Right cardiac atrium (tissue), 5 donors: ENCODE measurements at regions of chr17 and their contacts with region 1.

Region 1: DNA sequence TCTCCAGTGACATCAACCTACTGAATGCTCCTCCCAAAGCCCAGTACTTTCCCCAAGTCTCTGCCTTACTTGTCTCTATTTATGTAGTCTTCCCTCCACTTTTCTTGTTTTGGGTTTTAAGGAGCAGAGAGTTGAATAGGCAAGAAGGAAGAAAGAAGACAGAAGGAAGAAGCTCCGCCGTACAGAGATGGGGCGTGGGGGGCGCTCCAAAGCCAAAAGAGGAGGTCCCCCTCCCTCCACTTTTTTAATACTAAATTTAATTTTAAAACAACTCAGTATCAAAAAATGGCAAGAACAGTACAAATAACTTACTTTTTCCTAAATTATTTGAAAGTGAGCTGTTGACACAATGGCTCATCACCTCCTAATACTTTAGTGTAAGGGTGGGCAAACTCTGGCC is 4.6 kb downstream of the EFTUD2 start:
- DNase-seq: no peak
- ATAC-seq: no peak
- H3K4me3 ChIP-seq: no peak overlapping the region
- H3K27ac ChIP-seq: no peak overlapping the region
- H3K4me1 ChIP-seq: no peaks in the 10 kb centered on the region
- H3K27me3 ChIP-seq: no peaks in the 10 kb centered on the region

Region 2: DNA sequence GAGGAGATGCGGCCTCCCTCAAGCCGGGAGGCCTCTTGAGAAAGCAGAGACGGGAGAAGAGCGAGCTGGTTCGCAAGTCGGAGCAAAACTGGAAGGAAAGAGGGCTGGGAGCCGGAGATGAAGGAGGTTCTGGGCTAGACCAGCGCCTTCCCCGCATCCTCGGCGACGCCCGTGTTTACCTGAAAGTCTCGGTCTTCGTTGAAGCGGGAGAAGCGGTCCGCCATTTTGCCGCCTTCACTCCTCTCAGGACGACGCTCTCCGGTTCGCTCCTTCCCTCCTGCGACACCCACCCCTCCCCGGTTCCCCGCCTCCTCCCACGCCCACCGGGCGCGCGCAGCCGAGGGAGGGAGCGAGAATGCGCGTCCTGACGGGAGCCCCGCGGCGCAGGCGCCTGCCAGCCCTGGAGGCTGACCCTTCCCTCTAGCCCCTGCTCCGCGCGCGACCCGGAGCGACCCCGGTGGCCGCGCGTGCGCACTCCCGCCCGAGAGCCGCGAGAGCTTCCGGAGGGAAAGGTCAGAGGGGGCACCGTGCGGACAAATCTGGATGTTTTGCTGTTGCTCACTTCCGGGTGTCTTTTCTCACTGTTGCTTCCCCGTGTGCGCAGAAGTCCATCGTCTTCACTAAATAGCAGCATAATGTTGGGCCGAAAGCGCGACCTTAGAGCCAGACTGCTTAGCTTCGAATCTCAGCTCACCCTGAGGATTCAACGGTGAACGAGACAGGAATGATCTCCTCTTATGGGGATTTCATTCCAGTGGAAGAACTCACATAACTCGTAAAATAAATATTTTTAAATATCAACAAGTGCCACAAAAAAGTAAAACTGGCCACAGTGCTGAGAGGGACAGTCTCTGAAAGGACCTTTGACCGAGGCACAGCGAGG is 391.3 kb before region 1 on chr17 and contains the start of gene GPATCH8:
- intact Hi-C with region 1: no loop called
- DNase-seq: peak; percentile 96 to 99 (median 98)
- ATAC-seq: peak; percentile 97 to 99
- H3K4me3 ChIP-seq: peak within 1 kb of the TSS; percentile 67
- H3K27ac ChIP-seq: peak within 1 kb of the TSS; percentile 87
- H3K4me1 ChIP-seq: no peaks in the 10 kb centered on the region
- H3K27me3 ChIP-seq: no peaks in the 10 kb centered on the region
- total RNA-seq, gene GPATCH8: 32.4 to 35.9 (median 33.9) TPM

Region 3: DNA sequence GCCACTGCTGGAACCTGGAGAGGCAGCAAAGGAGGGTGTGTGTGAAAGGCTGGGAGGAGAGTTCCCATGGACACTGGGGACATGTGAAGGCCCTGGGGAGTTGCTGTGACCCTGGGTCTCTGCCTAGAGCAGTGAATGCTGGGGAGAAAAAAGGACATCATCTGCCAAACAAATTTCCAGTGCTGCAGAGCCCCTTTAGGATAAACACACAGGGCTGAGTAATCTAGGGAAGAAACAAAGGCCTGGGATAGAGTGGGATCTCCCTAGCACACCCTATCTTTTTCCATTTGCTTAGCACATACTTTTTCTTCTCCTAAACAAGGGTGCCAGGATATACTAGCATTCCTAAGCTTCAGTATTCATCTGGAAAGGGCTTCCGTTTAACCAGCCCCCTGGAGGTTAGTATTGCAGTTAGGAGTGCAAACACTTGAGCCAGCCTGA is 50.2 kb before region 1 on chr17:
- intact Hi-C with region 1: loop called in 1 of 4 experiments (anchors 5 kb)
- DNase-seq: peak in 1 of 3 donors; percentile 68
- ATAC-seq: peak; percentile 40 to 46
- H3K4me3 ChIP-seq: no peak overlapping the region
- H3K27ac ChIP-seq: no peak overlapping the region
- H3K4me1 ChIP-seq: no peaks in the 10 kb centered on the region
- H3K27me3 ChIP-seq: no peaks in the 10 kb centered on the region